ENCODE measurements at regions of chrX and their contacts with region 1.

Region 1: DNA sequence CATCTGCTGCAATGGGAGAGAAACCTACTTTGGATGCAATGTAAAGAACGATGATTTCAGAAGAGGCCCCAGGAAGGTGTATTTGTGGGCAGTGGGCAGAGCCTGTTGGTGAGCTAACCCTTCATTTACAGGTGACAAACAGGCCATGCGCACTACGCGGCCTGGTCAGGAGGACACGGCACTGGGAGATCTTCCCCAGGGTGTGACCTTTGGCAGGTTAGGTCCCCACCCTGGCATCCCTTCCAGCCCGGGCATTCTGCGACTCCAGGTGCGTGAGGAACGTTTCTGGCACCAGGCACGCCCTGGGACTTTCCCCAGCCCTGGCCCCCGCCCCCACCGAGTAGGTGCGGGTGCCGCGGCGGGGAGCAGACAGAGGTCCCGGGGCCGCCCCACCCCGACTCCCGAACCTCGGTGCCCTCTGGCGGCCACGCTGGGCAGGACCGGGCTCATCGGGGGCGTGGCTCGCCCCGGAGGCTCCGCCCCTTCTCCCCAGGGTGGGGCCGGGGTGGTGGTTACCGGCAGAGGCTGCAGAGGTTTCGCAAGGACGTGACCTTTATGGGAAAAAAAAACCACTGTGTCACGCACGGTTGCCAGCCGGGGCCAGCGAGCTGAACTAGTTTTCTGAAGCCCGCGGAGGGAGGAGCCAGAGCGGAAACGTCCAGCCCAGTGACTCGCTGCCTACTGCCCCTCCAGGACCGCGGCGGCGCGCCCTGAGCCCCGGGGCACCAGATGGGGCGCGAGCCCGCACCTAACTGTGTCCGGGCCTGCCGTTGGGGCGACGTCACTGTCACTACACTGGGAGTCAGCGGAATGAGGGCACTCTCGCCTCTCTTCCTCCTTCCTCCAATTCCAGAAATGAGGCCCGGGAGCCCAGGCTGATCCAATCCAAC is 5.0 kb upstream of the NYX start:
- DNase-seq: peak; percentile 97
- H3K4me3 Mint-ChIP-seq: peak overlapping the region; percentile 68
- H3K27ac Mint-ChIP-seq: peak overlapping the region; percentile 90
- H3K4me1 Mint-ChIP-seq: peaks cover 16% of the 10 kb centered on the region
- H3K27me3 Mint-ChIP-seq: no peaks in the 10 kb centered on the region

Region 2: DNA sequence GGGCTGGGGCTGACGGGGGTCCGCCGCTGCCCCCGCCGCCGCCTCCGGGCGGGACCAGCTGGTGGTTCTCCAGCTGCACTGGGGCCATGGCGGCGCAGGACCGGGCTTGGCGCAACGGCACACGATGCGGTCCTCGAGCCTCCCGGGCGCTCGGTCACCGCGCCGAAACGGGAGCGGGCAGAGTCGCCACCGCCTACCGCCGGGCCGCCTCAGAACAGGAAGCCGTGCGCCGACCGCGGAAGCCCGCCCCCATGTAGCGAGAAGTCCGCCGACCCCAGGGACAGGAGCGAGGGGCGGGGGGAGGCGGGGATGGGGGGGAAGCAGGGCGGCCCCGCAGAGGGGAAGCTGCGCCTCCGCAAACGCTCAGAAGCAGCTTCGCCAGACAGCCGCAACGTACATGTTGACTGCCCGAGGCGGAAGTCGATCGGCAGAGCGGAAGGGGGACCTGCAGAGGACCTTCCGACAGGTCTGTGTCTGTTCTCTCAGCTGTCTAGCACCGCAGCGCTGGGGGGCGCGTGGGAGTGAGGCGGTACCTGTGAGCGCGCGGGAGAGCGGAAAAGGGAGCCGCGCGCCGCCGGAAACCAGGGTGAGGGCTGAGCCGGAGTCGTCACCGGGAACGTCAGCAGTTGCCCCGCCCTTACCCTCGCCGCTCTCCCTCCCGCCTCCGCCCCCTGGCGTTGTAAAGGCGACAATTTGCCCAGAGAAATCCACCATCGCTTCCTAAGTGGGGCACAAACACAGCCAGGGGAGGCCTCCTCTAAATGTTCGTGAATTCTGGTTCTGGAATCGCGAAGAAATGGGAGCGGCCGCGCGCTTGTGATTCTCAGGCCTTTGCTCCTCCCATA is 706.6 kb before region 1 on chrX and contains the start of gene MED14:
- intact Hi-C with region 1: loop called (anchors 5 kb)
- DNase-seq: peak; percentile 95
- H3K4me3 Mint-ChIP-seq: peak within 1 kb of the TSS; percentile 86
- H3K27ac Mint-ChIP-seq: peak within 1 kb of the TSS; percentile 94
- H3K4me1 Mint-ChIP-seq: peaks cover 21% of the 10 kb centered on the region
- H3K27me3 Mint-ChIP-seq: no peaks in the 10 kb centered on the region
- total RNA-seq, gene MED14: 43.6 and 48.2 TPM in 2 replicates

Region 3: GRCh38 chrX:41275661-41276609 is 166.2 kb before region 1 on chrX:
- intact Hi-C with region 1: loop called (anchors 1 kb)
- DNase-seq: peak; percentile 82
- H3K4me3 Mint-ChIP-seq: peak overlapping the region; percentile 82
- H3K27ac Mint-ChIP-seq: peak overlapping the region; percentile 81
- H3K4me1 Mint-ChIP-seq: peaks cover 7% of the 10 kb centered on the region
- H3K27me3 Mint-ChIP-seq: peaks cover 2% of the 10 kb centered on the region

Region 4: DNA sequence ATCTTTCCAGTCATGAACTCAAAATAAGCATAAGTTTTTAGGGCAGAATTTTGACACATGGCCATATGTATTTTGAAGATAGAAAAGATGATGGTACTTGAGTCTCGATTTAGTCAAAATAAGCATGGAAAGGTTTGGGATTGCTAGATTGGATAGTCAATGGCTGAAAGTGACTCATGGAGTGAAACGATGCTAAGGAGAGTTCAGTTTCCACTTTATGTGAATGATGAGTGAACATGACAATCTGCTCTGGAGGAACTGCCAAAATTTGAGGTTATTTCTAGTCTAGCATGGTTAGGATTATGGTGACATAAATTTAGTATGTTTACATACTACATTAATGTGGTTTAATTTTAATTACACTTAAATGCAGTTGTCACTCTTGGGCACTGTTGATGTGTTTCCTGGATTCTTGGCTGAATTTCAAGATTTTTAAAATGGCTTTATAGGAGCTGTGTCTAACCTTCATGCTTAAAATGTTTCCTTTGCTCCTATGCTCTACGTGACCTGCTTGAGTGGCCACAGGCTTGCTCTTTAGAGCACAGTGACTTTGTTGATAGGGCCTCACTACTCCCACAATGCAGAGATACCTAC is 91.1 kb before region 1 on chrX:
- intact Hi-C with region 1: loop called (anchors 5 kb)
- DNase-seq: no peak
- H3K4me3 Mint-ChIP-seq: no peak overlapping the region
- H3K27ac Mint-ChIP-seq: peak overlapping the region; percentile 20
- H3K4me1 Mint-ChIP-seq: peaks cover 36% of the 10 kb centered on the region
- H3K27me3 Mint-ChIP-seq: no peaks in the 10 kb centered on the region

Region 5: GRCh38 chrX:41394293-41394692 is 47.9 kb before region 1 on chrX:
- intact Hi-C with region 1: no loop called
- DNase-seq: no peak
- H3K4me3 Mint-ChIP-seq: no peak overlapping the region
- H3K27ac Mint-ChIP-seq: no peak overlapping the region
- H3K4me1 Mint-ChIP-seq: peaks cover 2% of the 10 kb centered on the region
- H3K27me3 Mint-ChIP-seq: no peaks in the 10 kb centered on the region

Region 6: GRCh38 chrX:41421071-41421729 is 21.0 kb before region 1 on chrX:
- intact Hi-C with region 1: no loop called
- DNase-seq: no peak
- H3K4me3 Mint-ChIP-seq: peak overlapping the region; percentile 57
- H3K27ac Mint-ChIP-seq: no peak overlapping the region
- H3K4me1 Mint-ChIP-seq: peaks cover 2% of the 10 kb centered on the region
- H3K27me3 Mint-ChIP-seq: no peaks in the 10 kb centered on the region

Region 7: GRCh38 chrX:41481264-41482109 is 39.3 kb after region 1 on chrX:
- intact Hi-C with region 1: no loop called
- DNase-seq: peak; percentile 61
- H3K4me3 Mint-ChIP-seq: no peak overlapping the region
- H3K27ac Mint-ChIP-seq: no peak overlapping the region
- H3K4me1 Mint-ChIP-seq: peaks cover 2% of the 10 kb centered on the region
- H3K27me3 Mint-ChIP-seq: no peaks in the 10 kb centered on the region

Region 8: DNA sequence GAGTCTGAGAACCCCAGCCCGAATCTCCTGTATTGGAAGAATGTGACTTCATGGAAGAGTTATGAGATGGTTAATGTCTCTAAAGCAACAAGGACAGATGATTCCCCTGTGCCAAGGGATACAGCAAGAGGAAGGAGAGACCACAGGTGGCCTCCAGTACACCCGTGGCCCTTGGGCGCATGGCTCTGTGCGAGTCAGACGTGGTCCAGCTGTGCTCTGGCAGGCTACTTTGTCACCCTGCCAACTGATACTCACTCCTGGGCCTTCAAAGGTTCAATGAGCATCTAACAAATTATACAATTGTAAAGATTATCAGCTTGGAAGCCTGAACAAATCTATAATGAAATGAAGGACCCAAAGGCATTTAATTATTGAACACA is 76.7 kb after region 1 on chrX:
- intact Hi-C with region 1: loop called (anchors 5 kb)
- DNase-seq: no peak
- H3K4me3 Mint-ChIP-seq: peak overlapping the region; percentile 29
- H3K27ac Mint-ChIP-seq: peak overlapping the region; percentile 60
- H3K4me1 Mint-ChIP-seq: peaks cover 33% of the 10 kb centered on the region
- H3K27me3 Mint-ChIP-seq: no peaks in the 10 kb centered on the region

Region 9: DNA sequence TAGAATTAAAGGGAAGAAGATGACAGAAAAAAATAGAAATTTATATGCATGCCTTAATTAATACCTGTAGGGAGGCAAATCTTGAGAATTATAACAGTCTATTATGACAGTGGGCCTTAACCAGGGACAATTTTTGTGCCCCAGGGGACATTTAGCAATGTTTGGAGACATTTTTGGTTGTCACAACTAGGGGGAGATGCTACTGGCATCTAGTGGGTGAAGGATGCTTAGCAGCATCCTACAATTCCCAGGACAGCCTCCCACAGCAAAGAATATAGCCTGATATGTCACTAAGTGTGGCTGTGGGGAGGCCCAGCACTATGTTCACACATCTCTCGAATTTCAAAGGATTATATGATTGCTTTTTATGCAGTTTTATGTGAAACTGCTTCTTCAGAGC is 292.4 kb after region 1 on chrX:
- intact Hi-C with region 1: loop called (anchors 10 kb)
- DNase-seq: peak; percentile 58
- H3K4me3 Mint-ChIP-seq: peak overlapping the region; percentile 34
- H3K27ac Mint-ChIP-seq: peak overlapping the region; percentile 85
- H3K4me1 Mint-ChIP-seq: peaks cover 25% of the 10 kb centered on the region
- H3K27me3 Mint-ChIP-seq: no peaks in the 10 kb centered on the region

Measured in activated CD4-positive, alpha-beta T cell treated with anti-CD3 and anti-CD28 coated beads, Interleukin-2, amount 10 ng/mL, durations not matched to agents 24 days and 14 days (primary cell).